GM13976 (cell line): ENCODE measurements at regions of chr9 and their contacts with region 1.

Region 1: GRCh38 chr9:132575005-132575609 is 7.3 kb upstream of the BARHL1 start:
- DNase-seq: peak; percentile 82
- CTCF ChIP-seq: peak; percentile 61

Region 2: GRCh38 chr9:131562032-131562959 is 1012.8 kb before region 1 on chr9:
- in situ Hi-C with region 1: no loop called
- DNase-seq: no peak
- CTCF ChIP-seq: no peak

Region 3: GRCh38 chr9:132411091-132411508 is 164.0 kb before region 1 on chr9:
- in situ Hi-C with region 1: loop called (anchors 10 kb)
- DNase-seq: peak; percentile 78
- CTCF ChIP-seq: peak; percentile 80